ENCODE measurements at regions of chr9 and their contacts with region 1.

Region 1: DNA sequence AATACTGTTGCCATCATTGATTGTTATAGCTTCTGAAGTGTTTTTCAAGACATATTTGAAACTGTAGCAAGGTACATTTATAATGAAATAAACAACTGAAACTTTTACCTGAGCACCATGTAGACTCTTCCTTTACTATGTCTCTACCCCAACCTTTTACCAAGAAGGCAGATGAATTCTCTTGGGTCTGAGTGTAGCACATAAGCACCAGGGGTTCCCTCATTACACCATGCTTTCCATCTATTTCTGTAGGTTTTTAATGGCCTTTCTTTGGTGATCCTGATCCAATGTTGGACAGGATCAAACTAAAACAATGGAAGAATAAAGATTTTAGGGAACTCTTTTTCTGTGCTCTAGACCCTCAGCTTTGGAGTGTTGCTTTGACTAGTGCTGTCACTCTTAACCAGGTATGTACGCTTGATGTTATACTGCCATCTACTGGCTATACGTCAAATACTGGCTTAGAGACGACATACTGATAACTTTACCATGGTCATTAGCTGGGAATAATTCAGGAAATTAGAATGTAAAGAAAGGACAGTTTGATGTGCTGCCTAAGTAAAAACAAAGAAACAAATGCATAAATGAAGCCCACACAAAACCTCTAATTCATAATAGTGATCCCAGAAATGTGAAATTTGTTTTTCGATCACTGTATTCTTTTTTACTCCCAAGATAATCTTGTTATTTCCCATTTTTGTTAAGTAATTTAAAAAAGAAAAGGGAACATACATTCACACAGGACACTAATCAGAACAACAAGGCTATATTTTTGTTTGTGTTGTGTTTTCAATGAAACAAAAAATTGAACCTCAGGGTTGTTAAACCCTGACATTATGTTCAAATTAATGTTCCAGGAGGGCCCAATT is 30.7 kb downstream of the IFNW1 start:
- DNase-seq: peak; percentile 40 to 77
- ATAC-seq: peak; percentile 97 to 99
- H3K4me3 ChIP-seq: no peak overlapping the region
- H3K27ac ChIP-seq: no peak overlapping the region
- H3K4me1 ChIP-seq: no peaks in the 10 kb centered on the region
- CTCF ChIP-seq: peak; percentile 92
- EP300 ChIP-seq: no peak
- POLR2A ChIP-seq: no peak
- RAD21 ChIP-seq: peak; percentile 91 to 95

Region 2: DNA sequence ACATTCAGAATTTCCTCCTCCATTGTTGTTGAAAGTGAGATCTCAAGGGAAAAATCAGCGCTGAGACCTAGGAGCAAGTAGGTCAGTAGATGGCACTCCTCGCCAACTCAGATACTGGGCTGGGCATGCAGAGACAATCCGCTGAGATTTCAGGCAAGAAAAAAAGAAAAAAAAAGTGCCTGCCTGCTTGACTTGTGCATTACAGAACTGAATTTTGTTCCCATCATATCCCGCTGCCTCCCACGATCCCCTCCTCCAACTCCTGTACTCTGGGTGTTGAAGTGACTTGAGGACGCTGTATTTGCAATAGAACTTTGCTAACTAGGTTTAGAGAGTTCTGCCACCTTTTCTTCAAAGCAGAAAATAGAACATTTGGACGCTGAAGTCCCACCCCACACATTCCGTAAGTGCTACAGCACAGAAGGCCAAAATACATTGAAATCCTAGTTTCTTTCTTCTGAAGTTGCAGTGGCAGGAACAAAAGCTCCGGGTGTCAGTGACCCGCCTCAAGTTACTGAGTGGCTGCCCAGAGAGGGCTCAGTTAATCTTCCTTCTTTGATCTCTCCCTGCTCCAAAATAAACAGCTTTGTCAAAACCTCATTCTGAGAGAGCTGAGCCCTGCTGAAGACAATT is 754.4 kb before region 1 on chr9:
- CTCF ChIA-PET with region 1: interaction called, 17 read pairs
- POLR2A ChIA-PET with region 1: no interaction called
- DNase-seq: peak; percentile 66 to 83
- ATAC-seq: peak; percentile 94 to 95
- H3K4me3 ChIP-seq: peak overlapping the region; percentile 18; the same call in 1 of the 3 replicates
- H3K27ac ChIP-seq: peak overlapping the region; percentile 46 to 60; a peak in 4 of 6 replicates
- H3K4me1 ChIP-seq: peaks cover 40% of the 10 kb centered on the region
- CTCF ChIP-seq: peak; percentile 94
- EP300 ChIP-seq: no peak
- POLR2A ChIP-seq: no peak
- RAD21 ChIP-seq: peak; percentile 95 to 96

Region 3: DNA sequence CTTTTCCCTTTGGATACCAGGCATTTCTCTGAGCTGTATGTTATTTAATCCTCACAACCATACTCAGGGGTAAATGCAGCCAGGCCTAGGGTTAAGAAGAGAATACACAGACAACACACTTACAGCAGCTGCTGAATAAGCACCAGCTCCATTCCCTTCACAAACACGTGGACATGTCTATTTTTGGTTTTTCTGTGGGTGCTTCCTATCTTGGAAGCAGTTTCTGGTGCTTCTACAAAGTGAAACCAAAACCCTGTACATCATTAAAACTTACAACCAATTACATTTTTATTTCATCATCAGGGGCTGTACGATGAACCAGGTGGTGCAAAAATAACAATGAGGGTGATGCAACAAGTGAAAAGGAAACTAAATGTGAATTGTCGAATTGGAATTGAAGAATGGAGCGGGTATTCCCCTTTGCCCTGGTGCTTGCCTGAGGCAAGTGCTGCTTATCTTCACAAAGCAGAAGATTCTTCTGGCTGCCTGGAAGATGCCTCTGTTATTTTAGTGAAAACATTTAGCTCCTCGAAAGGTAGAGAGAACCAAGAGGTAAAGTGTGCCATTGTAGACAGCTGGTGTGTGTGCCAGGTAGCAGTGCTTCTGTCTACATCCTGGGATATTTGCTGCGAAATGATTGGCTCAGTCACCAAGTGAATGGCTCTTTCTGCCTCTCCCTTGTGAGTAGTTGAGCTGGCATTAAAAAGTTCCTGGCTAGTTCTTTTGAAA is 14.6 kb before region 1 on chr9:
- CTCF ChIA-PET with region 1: interaction called, 30 read pairs
- POLR2A ChIA-PET with region 1: no interaction called
- DNase-seq: no peak
- ATAC-seq: no peak
- H3K4me3 ChIP-seq: no peak overlapping the region
- H3K27ac ChIP-seq: peak overlapping the region in 1 of 2 experiments; percentile 2; a peak in 1 of 6 replicates
- H3K4me1 ChIP-seq: peaks cover 9% of the 10 kb centered on the region; the same call in 1 of the 3 replicates
- CTCF ChIP-seq: no peak
- EP300 ChIP-seq: no peak
- POLR2A ChIP-seq: no peak
- RAD21 ChIP-seq: no peak

Region 4: GRCh38 chr9:21141427-21141882 is 30.5 kb after region 1 on chr9 and contains the start of gene IFNW1:
- CTCF ChIA-PET with region 1: no interaction called
- POLR2A ChIA-PET with region 1: no interaction called
- DNase-seq: peak in 1 of 2 experiments; percentile 10
- ATAC-seq: peak; percentile 88 to 95
- H3K4me3 ChIP-seq: no peak within 1 kb of the TSS
- H3K27ac ChIP-seq: no peak within 1 kb of the TSS
- H3K4me1 ChIP-seq: no peaks in the 10 kb centered on the region
- CTCF ChIP-seq: no peak
- EP300 ChIP-seq: no peak
- POLR2A ChIP-seq: no peak
- RAD21 ChIP-seq: no peak
- polyA plus RNA-seq, gene IFNW1: not detected in 2 replicates

Measured in A549 (cell line).